Heart left ventricle (tissue), 16 donors: ENCODE measurements at regions of chr15 and their contacts with region 1.

Region 1: DNA sequence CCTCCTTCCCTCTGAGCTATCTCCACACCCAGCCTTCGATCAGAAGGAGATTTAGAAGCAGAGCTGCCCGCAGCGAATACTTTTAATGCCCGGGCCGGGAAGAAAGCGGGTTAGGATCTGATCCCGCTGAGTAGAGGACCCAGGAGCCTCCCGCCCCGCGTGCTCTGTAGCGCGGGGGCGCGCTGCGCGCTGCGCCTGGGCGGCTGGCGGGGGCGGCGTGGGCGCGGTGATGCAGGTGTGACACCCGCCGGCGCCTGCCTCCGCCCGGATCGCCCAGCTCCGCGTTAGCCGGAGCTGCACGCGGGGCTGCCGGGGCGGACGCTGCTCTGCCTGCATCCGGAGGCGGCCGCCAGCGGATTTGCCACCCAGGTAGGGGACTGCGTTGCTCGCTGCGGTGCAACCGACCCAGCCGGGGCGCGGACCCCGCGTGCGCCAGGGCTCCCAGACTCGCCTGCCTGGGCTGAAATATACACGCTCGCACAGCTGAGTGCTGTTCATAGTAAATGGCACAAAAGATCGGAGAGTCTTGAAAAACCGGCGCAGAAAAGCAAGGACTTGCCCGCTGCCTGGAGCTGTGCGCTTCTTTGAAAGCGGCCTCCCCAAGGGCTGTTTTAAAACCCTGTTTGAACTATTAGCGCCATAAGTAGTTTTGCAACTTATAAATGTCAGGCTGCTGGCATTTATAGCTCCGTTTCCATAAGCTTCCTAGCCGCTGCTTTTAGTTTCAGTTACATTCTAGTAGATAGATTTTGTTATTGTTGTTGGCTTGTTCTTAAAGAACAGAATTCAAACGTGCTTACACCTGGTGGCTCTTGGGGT is at the start of gene SV2B:
- DNase-seq: peak in 4 of 5 donors; percentile 25 to 62 (median 34)
- ATAC-seq: peak in 3 of 4 donors; percentile 27 to 68 (median 65)
- H3K4me3 ChIP-seq: peak within 1 kb of the TSS; percentile 28 to 68 (median 64)
- H3K27ac ChIP-seq: peak within 1 kb of the TSS in 5 of 12 donors; percentile 12 to 65 (median 29)
- H3K4me1 ChIP-seq: peaks cover 0 to 45% (median 30%) of the 10 kb centered on the region in 12 donors
- H3K27me3 ChIP-seq: peaks cover 0 to 81% (median 13%) of the 10 kb centered on the region in 9 donors
- CTCF ChIP-seq: peak in 1 of 12 donors; percentile 4
- POLR2A ChIP-seq: no peak
- total RNA-seq, gene SV2B: 0.63 to 23.5 (median 2.9) TPM

Region 2: GRCh38 chr15:91182101-91182500 is 81.9 kb after region 1 on chr15:
- intact Hi-C with region 1: no loop called
- DNase-seq: no peak
- ATAC-seq: no peak
- H3K4me3 ChIP-seq: no peak overlapping the region
- H3K27ac ChIP-seq: no peak overlapping the region
- H3K4me1 ChIP-seq: no peaks in the 10 kb centered on the region
- H3K27me3 ChIP-seq: peaks cover 0 to 9% (median 0%) of the 10 kb centered on the region in 9 donors
- CTCF ChIP-seq: no peak
- POLR2A ChIP-seq: no peak

Region 3: GRCh38 chr15:91263996-91264531 is 163.9 kb after region 1 on chr15:
- intact Hi-C with region 1: loop called in 1 of 10 experiments (anchors 5 kb)
- DNase-seq: peak; percentile 46 to 86 (median 81)
- ATAC-seq: peak; percentile 89 to 96 (median 95)
- H3K4me3 ChIP-seq: peak overlapping the region in 10 of 12 donors; percentile 16 to 42 (median 33)
- H3K27ac ChIP-seq: peak overlapping the region; percentile 57 to 90 (median 68)
- H3K4me1 ChIP-seq: peaks cover 0 to 32% (median 20%) of the 10 kb centered on the region in 12 donors
- H3K27me3 ChIP-seq: no peaks in the 10 kb centered on the region
- CTCF ChIP-seq: no peak
- POLR2A ChIP-seq: peak in 1 of 2 donors; percentile 28